Psoas muscle (tissue), 8 donors: ENCODE measurements at regions of chr11 and their contacts with region 1.

Region 1: GRCh38 chr11:5851002-5851401 is 6.5 kb downstream of the OR52E8 start:
- DNase-seq: no peak
- ATAC-seq: no peak
- H3K4me3 ChIP-seq: no peak overlapping the region
- H3K27ac ChIP-seq: no peak overlapping the region
- H3K4me1 ChIP-seq: no peaks in the 10 kb centered on the region
- H3K27me3 ChIP-seq: no peaks in the 10 kb centered on the region
- CTCF ChIP-seq: no peak

Region 2: GRCh38 chr11:7577291-7578190 is 1726.5 kb after region 1 on chr11:
- intact Hi-C with region 1: loop called in 1 of 2 experiments (anchors 10 kb)
- DNase-seq: peak; percentile 65 to 72
- ATAC-seq: peak; percentile 66 to 78 (median 74)
- H3K4me3 ChIP-seq: peak overlapping the region; percentile 64
- H3K27ac ChIP-seq: peak overlapping the region; percentile 90
- H3K4me1 ChIP-seq: peaks cover 74% of the 10 kb centered on the region
- H3K27me3 ChIP-seq: no peaks in the 10 kb centered on the region
- CTCF ChIP-seq: no peak